K562 (cell line): ENCODE measurements at regions of chr15 and their contacts with region 1.

Region 1: GRCh38 chr15:43903864-43904290 is 77.1 kb downstream of the WDR76 start:
- DNase-seq: peak; percentile 82 to 89 (median 84)
- ATAC-seq: peak; percentile 92
- H3K4me3 ChIP-seq: no peak overlapping the region
- H3K27ac ChIP-seq: no peak overlapping the region
- H3K4me1 ChIP-seq: peaks cover 8 to 20% of the 10 kb centered on the region in 2 experiments; a peak in 4 of 5 replicates
- H3K27me3 ChIP-seq: no peaks in the 10 kb centered on the region
- CTCF ChIP-seq: peak; percentile 90 to 93 (median 91)
- EP300 ChIP-seq: no peak
- POLR2A ChIP-seq: no peak
- RAD21 ChIP-seq: peak; percentile 75 to 89

Region 2: DNA sequence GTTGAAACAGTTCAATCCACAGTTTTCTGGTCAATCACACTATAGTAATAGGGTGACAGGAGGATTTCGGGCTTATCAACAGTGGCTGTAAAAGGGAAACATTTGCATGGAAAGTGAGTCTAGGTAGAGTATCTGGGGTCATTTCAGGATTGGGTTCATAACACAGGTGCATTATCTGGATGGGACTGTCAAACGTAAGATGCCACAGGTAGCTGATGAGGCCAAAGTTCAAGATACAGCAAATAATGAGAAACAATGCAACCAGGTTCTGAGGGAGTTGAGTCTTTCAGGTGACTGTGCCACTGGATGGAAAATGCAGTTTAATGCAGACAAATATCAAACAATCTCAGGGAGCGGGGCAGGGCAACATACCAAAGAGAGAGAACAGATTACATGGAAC is 14.8 kb before region 1 on chr15:
- CTCF ChIA-PET with region 1: no interaction called
- POLR2A ChIA-PET with region 1: interaction called, 18 read pairs
- in situ Hi-C with region 1: no loop called
- intact Hi-C with region 1: no loop called
- DNase-seq: no peak
- ATAC-seq: no peak
- H3K4me3 ChIP-seq: no peak overlapping the region
- H3K27ac ChIP-seq: no peak overlapping the region
- H3K4me1 ChIP-seq: peaks cover 0 to 3% of the 10 kb centered on the region in 2 experiments; a peak in 1 of 5 replicates
- H3K27me3 ChIP-seq: no peaks in the 10 kb centered on the region
- CTCF ChIP-seq: no peak
- EP300 ChIP-seq: no peak
- POLR2A ChIP-seq: no peak
- RAD21 ChIP-seq: no peak

Region 3: DNA sequence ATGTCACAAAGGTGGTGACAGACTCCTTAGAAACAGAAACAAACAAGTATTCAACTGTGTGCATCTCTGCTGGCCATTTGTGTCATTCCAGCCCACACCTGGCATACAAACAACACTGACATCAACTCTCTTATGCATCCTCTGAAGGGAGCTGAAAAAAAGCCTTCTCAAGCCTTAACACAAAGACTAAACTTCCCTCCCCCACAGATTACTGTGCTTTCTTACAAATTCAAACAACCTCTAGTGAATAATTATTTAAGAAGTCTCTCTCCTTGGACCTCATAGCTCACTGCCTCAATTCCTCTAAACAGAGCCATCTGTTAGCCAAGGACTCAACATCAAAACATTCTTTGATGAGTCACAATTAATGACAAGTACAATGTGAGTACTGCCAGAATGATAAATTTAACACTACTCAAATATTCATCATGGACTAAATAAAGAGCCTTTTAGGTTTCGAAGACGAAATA is 55.0 kb after region 1 on chr15:
- CTCF ChIA-PET with region 1: no interaction called
- POLR2A ChIA-PET with region 1: no interaction called
- in situ Hi-C with region 1: no loop called
- intact Hi-C with region 1: no loop called
- DNase-seq: no peak
- ATAC-seq: no peak
- H3K4me3 ChIP-seq: no peak overlapping the region
- H3K27ac ChIP-seq: no peak overlapping the region
- H3K4me1 ChIP-seq: no peaks in the 10 kb centered on the region
- H3K27me3 ChIP-seq: peaks cover 0 to 16% of the 10 kb centered on the region in 2 experiments; a peak in 3 of 5 replicates
- CTCF ChIP-seq: no peak
- EP300 ChIP-seq: no peak
- POLR2A ChIP-seq: no peak
- RAD21 ChIP-seq: no peak

Region 4: GRCh38 chr15:44009056-44009455 is 105.2 kb after region 1 on chr15:
- CTCF ChIA-PET with region 1: no interaction called
- POLR2A ChIA-PET with region 1: no interaction called
- in situ Hi-C with region 1: no loop called
- intact Hi-C with region 1: loop called (anchors 10 kb)
- DNase-seq: no peak
- ATAC-seq: no peak
- H3K4me3 ChIP-seq: no peak overlapping the region
- H3K27ac ChIP-seq: no peak overlapping the region
- H3K4me1 ChIP-seq: no peaks in the 10 kb centered on the region
- H3K27me3 ChIP-seq: peaks cover 5 to 8% of the 10 kb centered on the region in 2 experiments; a peak in 4 of 5 replicates
- CTCF ChIP-seq: no peak
- EP300 ChIP-seq: no peak
- POLR2A ChIP-seq: no peak
- RAD21 ChIP-seq: no peak

Region 5: GRCh38 chr15:44058126-44058525 is 154.2 kb after region 1 on chr15:
- CTCF ChIA-PET with region 1: no interaction called
- POLR2A ChIA-PET with region 1: no interaction called
- in situ Hi-C with region 1: loop called (anchors 5 kb)
- intact Hi-C with region 1: no loop called
- DNase-seq: no peak
- ATAC-seq: no peak
- H3K4me3 ChIP-seq: no peak overlapping the region
- H3K27ac ChIP-seq: no peak overlapping the region
- H3K4me1 ChIP-seq: no peaks in the 10 kb centered on the region
- H3K27me3 ChIP-seq: peaks cover 9% of the 10 kb centered on the region in 2 experiments; a peak in 4 of 5 replicates
- CTCF ChIP-seq: no peak
- EP300 ChIP-seq: no peak
- POLR2A ChIP-seq: no peak
- RAD21 ChIP-seq: no peak

Region 6: GRCh38 chr15:44066316-44066740 is 162.5 kb after region 1 on chr15:
- CTCF ChIA-PET with region 1: interaction called, 32 read pairs
- POLR2A ChIA-PET with region 1: interaction called, 4 read pairs
- in situ Hi-C with region 1: no loop called
- intact Hi-C with region 1: loop called (anchors 1 kb)
- DNase-seq: peak; percentile 54 to 80 (median 62)
- ATAC-seq: peak; percentile 90
- H3K4me3 ChIP-seq: no peak overlapping the region
- H3K27ac ChIP-seq: no peak overlapping the region
- H3K4me1 ChIP-seq: no peaks in the 10 kb centered on the region
- H3K27me3 ChIP-seq: no peaks in the 10 kb centered on the region; a peak in 1 of 5 replicates
- CTCF ChIP-seq: peak; percentile 63 to 86 (median 80)
- EP300 ChIP-seq: no peak
- POLR2A ChIP-seq: no peak
- RAD21 ChIP-seq: peak; percentile 65 to 83

Region 7: GRCh38 chr15:44215594-44215993 is 311.7 kb after region 1 on chr15:
- CTCF ChIA-PET with region 1: interaction called, 3 read pairs
- POLR2A ChIA-PET with region 1: no interaction called
- in situ Hi-C with region 1: no loop called
- intact Hi-C with region 1: loop called (anchors 5 kb)
- DNase-seq: no peak
- ATAC-seq: no peak
- H3K4me3 ChIP-seq: no peak overlapping the region
- H3K27ac ChIP-seq: no peak overlapping the region
- H3K4me1 ChIP-seq: no peaks in the 10 kb centered on the region; a peak in 1 of 5 replicates
- H3K27me3 ChIP-seq: peaks cover 17 to 19% of the 10 kb centered on the region in 2 experiments
- CTCF ChIP-seq: no peak
- EP300 ChIP-seq: no peak
- POLR2A ChIP-seq: no peak
- RAD21 ChIP-seq: no peak

Region 8: DNA sequence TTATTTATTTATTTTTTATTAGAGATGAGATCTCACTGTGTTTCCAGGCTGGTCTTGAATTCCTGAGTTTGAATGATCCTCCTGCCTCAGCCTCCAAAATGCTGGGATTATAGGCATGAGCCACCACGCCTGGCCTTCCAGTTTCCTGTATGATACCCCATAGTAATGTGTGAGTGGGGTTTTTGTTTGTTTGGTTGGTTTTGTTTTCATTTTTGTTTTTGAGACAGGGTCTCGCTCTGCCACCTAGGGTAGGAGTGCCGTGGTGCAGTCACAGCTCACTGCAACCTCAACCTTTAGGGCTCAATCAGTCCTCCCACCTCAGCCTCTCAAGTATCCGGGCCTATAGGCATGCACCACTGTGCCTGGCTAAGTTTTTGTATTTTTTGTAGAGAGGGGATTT is 415.5 kb after region 1 on chr15:
- CTCF ChIA-PET with region 1: no interaction called
- POLR2A ChIA-PET with region 1: no interaction called
- in situ Hi-C with region 1: no loop called
- intact Hi-C with region 1: loop called (anchors 5 kb)
- DNase-seq: peak in 1 of 4 experiments; percentile 12
- ATAC-seq: peak; percentile 67
- H3K4me3 ChIP-seq: no peak overlapping the region
- H3K27ac ChIP-seq: no peak overlapping the region
- H3K4me1 ChIP-seq: 0 out of 5 replicates have a peak, but pooled peaks cover 0 to 2% of the 10 kb centered on the region in 2 experiments
- H3K27me3 ChIP-seq: no peaks in the 10 kb centered on the region
- CTCF ChIP-seq: peak; percentile 41 to 50 (median 41); a peak in 3 of 6 replicates
- EP300 ChIP-seq: no peak
- POLR2A ChIP-seq: no peak
- RAD21 ChIP-seq: 0 out of 4 replicates have a peak, but pooled peaks of 1 of the 2 experiments have one; percentile 33